Esophagus muscularis mucosa (tissue), 4 donors: ENCODE measurements at regions of chr12 and their contacts with region 1.

Region 1: GRCh38 chr12:85029456-85029855 is 6.6 kb downstream of the TSPAN19 start:
- DNase-seq: no peak
- H3K4me3 ChIP-seq: no peak overlapping the region
- H3K27ac ChIP-seq: no peak overlapping the region
- H3K4me1 ChIP-seq: no peaks in the 10 kb centered on the region
- H3K27me3 ChIP-seq: peaks cover 0 to 4% (median 0%) of the 10 kb centered on the region in 4 donors
- CTCF ChIP-seq: peak; percentile 35 to 57 (median 53)
- EP300 ChIP-seq: no peak
- POLR2A ChIP-seq: no peak

Region 2: DNA sequence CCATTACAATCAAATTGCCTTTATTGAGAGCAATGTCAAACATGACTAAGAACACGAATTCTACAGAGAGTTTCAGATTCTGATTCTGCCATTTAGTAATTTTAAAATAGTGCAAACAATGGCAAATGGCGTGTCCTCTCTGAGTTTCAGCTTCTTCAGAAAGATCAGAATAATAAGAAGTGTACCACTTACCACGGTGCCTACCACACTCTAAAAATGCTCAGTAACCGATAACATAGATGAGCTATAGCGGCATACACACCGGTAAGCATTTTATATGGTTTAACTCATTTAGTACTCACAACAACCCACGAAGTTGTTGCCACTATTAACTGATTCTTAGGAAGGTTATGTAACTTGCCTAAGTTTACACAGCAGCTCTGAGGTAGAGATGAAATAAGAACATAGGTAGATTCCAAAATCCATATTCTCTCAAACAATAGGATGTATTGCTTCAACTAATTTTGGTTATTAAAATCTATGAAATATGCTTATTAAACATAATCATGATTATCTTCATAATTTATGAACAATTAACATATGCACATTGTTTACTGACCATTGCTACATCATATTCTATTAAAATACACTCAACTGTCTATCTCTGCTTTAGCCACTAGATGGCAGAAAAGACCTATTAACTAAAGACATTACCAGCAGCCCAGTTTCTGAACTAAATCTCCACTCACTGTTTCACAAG is 155.2 kb before region 1 on chr12:
- intact Hi-C with region 1: loop called (anchors 2 kb)
- DNase-seq: no peak
- H3K4me3 ChIP-seq: no peak overlapping the region
- H3K27ac ChIP-seq: no peak overlapping the region
- H3K4me1 ChIP-seq: no peaks in the 10 kb centered on the region
- H3K27me3 ChIP-seq: no peaks in the 10 kb centered on the region
- CTCF ChIP-seq: peak; percentile 67 to 77 (median 71)
- EP300 ChIP-seq: no peak
- POLR2A ChIP-seq: no peak

Region 3: DNA sequence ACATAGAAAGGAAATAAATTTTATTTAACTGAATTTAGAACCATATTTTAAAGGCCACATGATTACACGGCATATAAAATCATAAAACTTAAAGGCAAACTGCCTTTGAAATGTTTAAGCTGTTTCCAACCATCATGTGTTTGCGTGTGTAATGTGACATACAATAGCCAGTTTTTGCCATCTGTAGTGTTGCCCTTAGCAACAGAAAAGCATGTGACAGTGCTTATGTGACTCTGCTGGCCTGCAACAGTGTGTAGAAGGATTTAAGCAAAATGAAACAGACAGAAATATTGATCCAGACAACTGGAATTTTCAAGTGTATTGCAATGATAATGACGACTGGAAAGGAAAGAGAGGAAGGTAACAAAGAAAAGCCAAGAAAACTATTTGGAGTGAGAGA is 42.9 kb before region 1 on chr12:
- intact Hi-C with region 1: no loop called
- DNase-seq: no peak
- H3K4me3 ChIP-seq: no peak overlapping the region
- H3K27ac ChIP-seq: no peak overlapping the region
- H3K4me1 ChIP-seq: no peaks in the 10 kb centered on the region
- H3K27me3 ChIP-seq: no peaks in the 10 kb centered on the region
- CTCF ChIP-seq: no peak
- EP300 ChIP-seq: no peak
- POLR2A ChIP-seq: no peak

Region 4: DNA sequence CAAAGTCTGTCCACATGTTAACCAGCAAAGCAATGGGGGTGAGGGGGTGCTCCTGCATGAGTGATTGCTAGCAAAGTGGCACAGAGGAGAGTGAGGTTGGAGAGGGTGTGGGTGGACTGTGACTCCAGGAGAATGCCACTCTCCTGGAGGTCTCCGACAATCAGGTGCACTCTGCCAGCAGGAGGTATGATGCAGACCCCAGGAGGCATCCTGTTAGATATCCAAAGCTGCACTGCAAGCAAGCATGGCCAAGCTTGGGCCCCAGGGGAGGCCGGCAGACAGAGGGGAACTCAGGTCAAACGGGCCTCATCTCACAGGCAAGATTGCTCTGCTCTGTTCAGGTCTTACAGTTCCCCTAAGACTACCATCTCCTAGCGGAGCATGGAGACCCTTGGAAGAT is 177.1 kb after region 1 on chr12:
- intact Hi-C with region 1: no loop called
- DNase-seq: no peak
- H3K4me3 ChIP-seq: no peak overlapping the region
- H3K27ac ChIP-seq: no peak overlapping the region
- H3K4me1 ChIP-seq: no peaks in the 10 kb centered on the region
- H3K27me3 ChIP-seq: no peaks in the 10 kb centered on the region
- CTCF ChIP-seq: no peak
- EP300 ChIP-seq: no peak
- POLR2A ChIP-seq: no peak

Region 5: DNA sequence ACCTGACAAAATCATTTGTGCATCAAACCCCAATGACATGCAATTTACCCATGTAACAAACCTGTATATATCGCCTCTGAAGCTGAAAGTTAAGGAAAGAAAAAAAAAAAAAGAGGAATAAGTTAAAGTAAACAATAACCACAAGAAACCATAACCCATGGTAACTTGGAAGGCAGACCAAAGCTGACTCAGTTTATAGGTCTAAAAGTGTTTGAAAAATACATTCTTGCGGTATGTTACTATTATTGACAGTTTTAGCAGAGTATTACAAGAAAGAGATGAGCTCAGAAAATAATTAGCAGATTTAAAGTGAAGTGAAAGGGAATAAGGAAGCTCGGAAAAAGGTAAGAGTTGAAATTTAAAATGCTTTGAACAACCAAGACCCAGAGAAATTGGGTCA is 1261.2 kb after region 1 on chr12:
- intact Hi-C with region 1: no loop called
- DNase-seq: no peak
- H3K4me3 ChIP-seq: no peak overlapping the region
- H3K27ac ChIP-seq: no peak overlapping the region
- H3K4me1 ChIP-seq: no peaks in the 10 kb centered on the region
- H3K27me3 ChIP-seq: no peaks in the 10 kb centered on the region
- CTCF ChIP-seq: no peak
- EP300 ChIP-seq: no peak
- POLR2A ChIP-seq: no peak